ENCODE measurements at regions of chr11 and their contacts with region 1.

Region 1: DNA sequence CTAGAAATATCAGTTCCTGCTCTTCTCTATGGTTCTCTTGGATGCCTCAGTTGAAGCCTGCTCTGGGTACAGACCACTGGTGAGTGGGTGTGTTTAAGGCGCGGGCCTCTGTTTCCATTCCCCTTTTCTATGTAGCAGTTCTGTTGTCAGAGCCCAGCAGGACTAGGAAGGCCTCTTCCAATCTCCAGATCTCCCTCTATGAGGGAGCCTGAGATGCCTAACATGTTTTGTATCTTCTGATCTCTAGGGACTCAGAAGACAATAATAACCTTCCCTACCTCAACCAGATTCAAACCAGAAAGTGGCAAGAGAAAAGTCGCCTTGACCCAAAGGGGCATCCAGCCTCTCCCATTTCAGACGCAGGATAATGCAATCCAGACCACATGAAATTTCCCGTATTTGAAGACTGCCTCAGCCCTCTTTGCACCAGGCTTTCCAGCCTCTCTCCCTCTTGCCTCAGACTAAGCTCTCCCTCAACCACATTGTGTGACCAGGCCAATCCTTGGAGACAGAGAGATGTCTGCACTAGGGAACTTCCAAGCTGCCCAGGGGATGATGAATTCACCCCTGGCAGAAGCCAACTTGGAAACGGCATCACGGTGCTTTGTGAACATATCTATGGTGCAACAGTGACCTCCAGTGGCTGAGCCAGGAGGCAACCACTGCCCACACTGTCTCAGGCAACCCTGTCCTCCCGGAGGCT is 150.1 kb upstream of the UBASH3B start:
- DNase-seq: peak; percentile 57
- CTCF ChIP-seq: peak; percentile 81

Region 2: GRCh38 chr11:122521626-122522025 is 16.2 kb after region 1 on chr11:
- CTCF ChIA-PET with region 1: interaction called, 10 read pairs
- POLR2A ChIA-PET with region 1: no interaction called
- DNase-seq: no peak
- CTCF ChIP-seq: no peak

Measured in GM10248 (cell line).